Panc1 (cell line): ENCODE measurements at regions of chr21 and their contacts with region 1.

Region 1: DNA sequence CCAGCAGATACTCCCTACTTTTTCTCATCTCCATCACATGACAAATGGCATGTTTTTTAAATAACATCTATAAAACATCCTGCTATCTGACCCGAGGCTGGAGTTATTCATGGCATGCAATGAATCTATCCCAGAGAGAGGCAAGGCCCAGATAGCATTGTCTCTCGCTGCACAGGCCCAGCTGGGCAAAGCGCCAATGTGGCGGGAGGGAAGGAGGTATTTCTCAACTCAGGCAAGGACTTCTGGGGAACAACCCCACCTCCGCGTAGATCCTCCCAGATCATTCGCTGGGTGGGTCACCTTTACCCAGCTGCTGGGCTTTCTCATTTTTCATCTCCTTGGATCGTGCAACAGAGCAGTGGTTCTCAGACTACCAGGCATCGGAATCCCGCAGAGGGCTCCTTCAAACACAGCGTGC is 59.8 kb downstream of the ERG start:
- DNase-seq: no peak
- ATAC-seq: no peak
- H3K4me3 ChIP-seq: no peak overlapping the region
- H3K27ac ChIP-seq: no peak overlapping the region
- H3K4me1 ChIP-seq: no peaks in the 10 kb centered on the region
- H3K27me3 ChIP-seq: no peaks in the 10 kb centered on the region
- CTCF ChIP-seq: no peak

Region 2: DNA sequence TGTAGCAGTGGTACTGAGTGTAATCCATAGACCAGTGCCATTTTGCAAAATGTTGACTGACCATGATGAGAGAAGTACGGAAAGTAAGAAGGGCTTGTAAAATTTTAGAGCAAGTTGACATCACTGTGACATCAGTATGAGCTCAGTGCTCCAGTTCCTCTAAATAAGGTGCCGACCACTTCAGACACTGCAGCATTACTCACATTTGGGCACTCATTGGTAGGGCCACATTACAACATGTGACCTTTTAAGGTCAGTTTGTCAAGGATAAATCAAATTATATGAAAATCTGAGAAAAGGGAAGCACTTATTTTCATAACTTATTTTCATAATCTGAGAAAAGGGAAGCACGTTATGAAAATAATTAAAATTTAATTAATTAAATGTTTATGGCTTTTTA is 187.8 kb after region 1 on chr21:
- CTCF ChIA-PET with region 1: no interaction called
- POLR2A ChIA-PET with region 1: interaction called, 13 read pairs
- in situ Hi-C with region 1: no loop called
- intact Hi-C with region 1: no loop called
- DNase-seq: no peak
- ATAC-seq: no peak
- H3K4me3 ChIP-seq: no peak overlapping the region
- H3K27ac ChIP-seq: no peak overlapping the region
- H3K4me1 ChIP-seq: no peaks in the 10 kb centered on the region
- H3K27me3 ChIP-seq: no peaks in the 10 kb centered on the region
- CTCF ChIP-seq: no peak